ENCODE measurements at regions of chr16 and their contacts with region 1.

Region 1: GRCh38 chr16:29815793-29816693 is at the start of gene PAGR1:
- DNase-seq: peak; percentile 100
- H3K4me3 ChIP-seq: peak within 1 kb of the TSS; percentile 65 to 85 (median 81)
- H3K27ac ChIP-seq: peak within 1 kb of the TSS; percentile 47
- H3K4me1 ChIP-seq: peaks cover 35% of the 10 kb centered on the region
- H3K27me3 ChIP-seq: no peaks in the 10 kb centered on the region
- CTCF ChIP-seq: peak; percentile 95 to 98
- POLR2A ChIP-seq: peak; percentile 80
- total RNA-seq, gene PAGR1: 24.2 and 26.3 TPM in 2 replicates

Region 2: DNA sequence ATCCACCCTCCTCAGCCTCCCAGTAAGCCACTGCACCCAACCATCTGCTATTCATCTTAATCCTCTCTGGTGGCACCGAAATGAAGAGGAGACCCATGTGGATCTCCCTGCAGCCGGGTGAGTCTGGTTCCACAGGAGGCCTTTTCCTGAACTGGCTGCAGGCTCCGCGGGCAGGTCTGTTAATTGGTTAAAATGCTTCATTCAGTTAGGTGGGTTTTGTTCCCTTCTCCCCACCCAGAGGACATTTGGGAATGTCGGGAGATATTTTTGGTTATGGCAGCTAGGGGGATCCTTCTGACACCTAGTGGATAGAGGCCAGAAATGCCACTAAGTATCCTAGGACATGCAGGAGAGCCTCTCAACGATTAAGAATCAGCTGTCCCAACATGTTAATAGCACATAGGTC is 86.9 kb before region 1 on chr16:
- CTCF ChIA-PET with region 1: no interaction called
- POLR2A ChIA-PET with region 1: no interaction called
- dilution Hi-C with region 1: no loop called
- intact Hi-C with region 1: loop called (anchors 1 kb)
- DNase-seq: peak; percentile 43
- H3K4me3 ChIP-seq: no peak overlapping the region
- H3K27ac ChIP-seq: no peak overlapping the region
- H3K4me1 ChIP-seq: no peaks in the 10 kb centered on the region
- H3K27me3 ChIP-seq: peaks cover 2 to 6% of the 10 kb centered on the region in 2 experiments
- CTCF ChIP-seq: peak; percentile 41 to 66
- POLR2A ChIP-seq: no peak

Region 3: GRCh38 chr16:29790183-29790952 is 25.7 kb before region 1 on chr16 and contains the start of gene KIF22:
- CTCF ChIA-PET with region 1: interaction called, 10 read pairs
- POLR2A ChIA-PET with region 1: no interaction called
- dilution Hi-C with region 1: no loop called
- intact Hi-C with region 1: loop called (anchors 1 kb)
- DNase-seq: peak; percentile 99
- H3K4me3 ChIP-seq: peak within 1 kb of the TSS; percentile 80 to 93 (median 88)
- H3K27ac ChIP-seq: peak within 1 kb of the TSS; percentile 13
- H3K4me1 ChIP-seq: peaks cover 23% of the 10 kb centered on the region
- H3K27me3 ChIP-seq: no peaks in the 10 kb centered on the region
- CTCF ChIP-seq: peak; percentile 85 to 90
- POLR2A ChIP-seq: peak; percentile 70
- total RNA-seq, gene KIF22: 82.3 and 90.0 TPM in 2 replicates

Region 4: GRCh38 chr16:29862884-29863668 is 47.0 kb after region 1 on chr16 and contains the start of gene CDIPT:
- CTCF ChIA-PET with region 1: interaction called, 4 read pairs
- POLR2A ChIA-PET with region 1: no interaction called
- dilution Hi-C with region 1: no loop called
- intact Hi-C with region 1: loop called (anchors 2 kb)
- DNase-seq: peak; percentile 96
- H3K4me3 ChIP-seq: peak within 1 kb of the TSS; percentile 55 to 73 (median 64)
- H3K27ac ChIP-seq: peak within 1 kb of the TSS; percentile 100
- H3K4me1 ChIP-seq: peaks cover 7% of the 10 kb centered on the region
- H3K27me3 ChIP-seq: no peaks in the 10 kb centered on the region
- CTCF ChIP-seq: peak; percentile 53 to 85
- POLR2A ChIP-seq: peak; percentile 51
- total RNA-seq, gene CDIPT: 67.3 and 68.7 TPM in 2 replicates

Region 5: DNA sequence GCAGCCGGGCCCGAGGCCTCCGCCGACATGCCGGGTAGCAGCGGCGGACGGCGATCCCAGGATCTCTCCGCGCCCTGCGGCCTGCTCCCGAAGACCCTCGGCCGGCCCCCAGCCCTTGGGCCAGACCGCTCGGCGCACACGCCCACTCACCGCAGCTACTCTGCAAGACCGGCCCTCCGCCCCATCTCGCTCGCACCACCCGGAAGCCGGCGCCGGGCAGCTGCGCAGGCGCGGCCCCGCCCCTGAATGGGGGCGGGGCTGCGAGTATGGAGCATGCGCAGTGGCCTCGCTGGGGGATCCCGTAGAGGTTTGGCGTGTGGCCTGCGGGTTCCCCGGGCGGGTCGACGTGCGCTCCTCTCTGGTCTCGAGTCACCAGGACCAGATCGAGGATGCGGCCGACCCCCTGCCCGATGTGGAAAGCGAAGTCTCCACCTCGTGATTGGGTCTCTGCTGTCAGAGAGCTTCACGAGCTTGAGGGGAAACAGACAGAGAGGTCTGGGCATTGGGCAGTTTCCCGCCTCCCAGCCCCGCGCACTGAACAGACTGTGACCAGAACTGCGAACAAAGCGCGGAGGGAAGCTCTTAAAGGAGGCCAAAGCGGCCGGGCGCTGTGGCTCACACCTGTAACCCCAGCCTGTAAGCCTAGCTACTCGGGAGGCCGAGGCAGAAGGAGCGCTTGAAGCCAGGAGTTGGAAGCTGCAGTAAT is 110.1 kb after region 1 on chr16 and contains the start of gene KCTD13:
- CTCF ChIA-PET with region 1: no interaction called
- POLR2A ChIA-PET with region 1: no interaction called
- dilution Hi-C with region 1: no loop called
- intact Hi-C with region 1: loop called (anchors 5 kb)
- DNase-seq: peak; percentile 91
- H3K4me3 ChIP-seq: peak within 1 kb of the TSS; percentile 61 to 78 (median 73)
- H3K27ac ChIP-seq: peak within 1 kb of the TSS; percentile 19
- H3K4me1 ChIP-seq: peaks cover 15% of the 10 kb centered on the region
- H3K27me3 ChIP-seq: no peaks in the 10 kb centered on the region
- CTCF ChIP-seq: no peak
- POLR2A ChIP-seq: peak; percentile 93
- total RNA-seq, gene KCTD13: 21.0 and 24.2 TPM in 2 replicates

Region 6: GRCh38 chr16:29995911-29996772 is 180.1 kb after region 1 on chr16 and contains the start of gene INO80E:
- CTCF ChIA-PET with region 1: no interaction called
- POLR2A ChIA-PET with region 1: no interaction called
- dilution Hi-C with region 1: no loop called
- intact Hi-C with region 1: loop called (anchors 1 kb)
- DNase-seq: peak; percentile 95
- H3K4me3 ChIP-seq: peak within 1 kb of the TSS; percentile 70 to 81 (median 73)
- H3K27ac ChIP-seq: peak within 1 kb of the TSS; percentile 76
- H3K4me1 ChIP-seq: peaks cover 22% of the 10 kb centered on the region
- H3K27me3 ChIP-seq: no peaks in the 10 kb centered on the region
- CTCF ChIP-seq: no peak
- POLR2A ChIP-seq: no peak
- total RNA-seq, gene INO80E: 76.4 and 84.1 TPM in 2 replicates

Measured in endothelial cell of umbilical vein (primary cell).